Activated CD8-positive, alpha-beta memory T cell treated with anti-CD3 and anti-CD28 coated beads, Interleukin-2, amount 10 ng/mL, durations not matched to agents 7 days and 5 days (primary cell): ENCODE measurements at regions of chr1 and their contacts with region 1.

Region 1: GRCh38 chr1:31745096-31745945 is 18.8 kb downstream of the ADGRB2 start:
- DNase-seq: peak; percentile 84
- ATAC-seq: peak; percentile 88
- H3K4me3 Mint-ChIP-seq: no peak overlapping the region
- H3K27ac Mint-ChIP-seq: no peak overlapping the region
- H3K4me1 Mint-ChIP-seq: peaks cover 39% of the 10 kb centered on the region
- H3K27me3 Mint-ChIP-seq: peaks cover 8% of the 10 kb centered on the region

Region 2: GRCh38 chr1:31626223-31627207 is 118.8 kb before region 1 on chr1:
- CTCF ChIA-PET with region 1: no interaction called
- DNase-seq: no peak
- ATAC-seq: no peak
- H3K4me3 Mint-ChIP-seq: no peak overlapping the region
- H3K27ac Mint-ChIP-seq: no peak overlapping the region
- H3K4me1 Mint-ChIP-seq: peaks cover 16% of the 10 kb centered on the region
- H3K27me3 Mint-ChIP-seq: no peaks in the 10 kb centered on the region

Region 3: DNA sequence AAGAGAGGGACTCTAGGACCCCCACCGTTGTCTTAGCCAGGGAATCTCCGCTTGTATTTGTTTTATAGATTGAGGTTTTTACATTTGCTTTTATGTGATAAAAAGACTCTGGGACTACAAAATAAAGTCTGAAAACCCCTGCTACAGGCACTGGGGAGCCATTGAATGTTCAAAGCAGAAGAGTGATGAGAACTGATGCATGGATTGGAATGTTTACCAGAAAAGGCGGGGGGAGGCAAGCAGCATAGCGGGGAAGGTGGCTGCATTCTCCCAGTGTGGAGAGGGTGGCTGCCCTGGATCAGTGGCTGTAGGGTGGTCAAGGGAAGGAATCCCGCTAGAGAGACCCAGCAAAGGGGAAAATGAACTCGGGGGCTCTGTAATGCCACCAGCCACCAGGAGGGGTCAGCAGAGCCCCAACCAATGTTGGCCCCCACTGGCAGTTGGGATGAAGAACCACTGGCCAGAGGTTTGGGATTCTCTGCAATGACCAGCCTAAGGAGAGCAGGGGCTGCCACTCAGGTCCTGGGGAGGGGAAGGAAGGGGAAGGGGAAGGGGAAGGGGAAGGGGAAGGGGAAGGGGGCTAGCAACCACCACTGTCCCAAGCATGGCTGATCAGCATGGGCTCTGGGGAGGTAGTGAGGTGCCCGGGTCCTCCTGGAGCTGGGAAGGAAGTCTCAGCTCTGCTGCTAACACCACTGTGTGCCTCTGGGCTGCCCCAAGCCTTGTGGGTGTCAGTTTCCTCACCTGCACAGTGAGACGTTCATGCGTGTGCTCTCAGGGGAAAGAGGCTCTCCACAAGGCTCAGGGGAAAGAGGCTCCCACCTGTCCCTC is 81.5 kb before region 1 on chr1:
- CTCF ChIA-PET with region 1: interaction called, 41 read pairs
- DNase-seq: peak; percentile 68
- ATAC-seq: peak; percentile 40
- H3K4me3 Mint-ChIP-seq: no peak overlapping the region
- H3K27ac Mint-ChIP-seq: no peak overlapping the region
- H3K4me1 Mint-ChIP-seq: no peaks in the 10 kb centered on the region
- H3K27me3 Mint-ChIP-seq: peaks cover 10% of the 10 kb centered on the region

Region 4: GRCh38 chr1:31705080-31705866 is 40.0 kb before region 1 on chr1:
- CTCF ChIA-PET with region 1: interaction called, 16 read pairs
- DNase-seq: peak; percentile 92
- ATAC-seq: peak; percentile 87
- H3K4me3 Mint-ChIP-seq: peak overlapping the region; percentile 31
- H3K27ac Mint-ChIP-seq: peak overlapping the region; percentile 61
- H3K4me1 Mint-ChIP-seq: peaks cover 51% of the 10 kb centered on the region
- H3K27me3 Mint-ChIP-seq: peaks cover 44% of the 10 kb centered on the region

Region 5: GRCh38 chr1:31715087-31715872 is 30.0 kb before region 1 on chr1:
- CTCF ChIA-PET with region 1: interaction called, 12 read pairs
- DNase-seq: peak; percentile 54
- ATAC-seq: peak; percentile 71
- H3K4me3 Mint-ChIP-seq: peak overlapping the region; percentile 48
- H3K27ac Mint-ChIP-seq: no peak overlapping the region
- H3K4me1 Mint-ChIP-seq: peaks cover 11% of the 10 kb centered on the region
- H3K27me3 Mint-ChIP-seq: peaks cover 73% of the 10 kb centered on the region

Region 6: GRCh38 chr1:31762726-31763670 is 17.7 kb after region 1 on chr1:
- CTCF ChIA-PET with region 1: interaction called, 17 read pairs
- DNase-seq: peak; percentile 59
- ATAC-seq: peak; percentile 48
- H3K4me3 Mint-ChIP-seq: peak overlapping the region; percentile 52
- H3K27ac Mint-ChIP-seq: no peak overlapping the region
- H3K4me1 Mint-ChIP-seq: peaks cover 19% of the 10 kb centered on the region
- H3K27me3 Mint-ChIP-seq: peaks cover 53% of the 10 kb centered on the region

Region 7: DNA sequence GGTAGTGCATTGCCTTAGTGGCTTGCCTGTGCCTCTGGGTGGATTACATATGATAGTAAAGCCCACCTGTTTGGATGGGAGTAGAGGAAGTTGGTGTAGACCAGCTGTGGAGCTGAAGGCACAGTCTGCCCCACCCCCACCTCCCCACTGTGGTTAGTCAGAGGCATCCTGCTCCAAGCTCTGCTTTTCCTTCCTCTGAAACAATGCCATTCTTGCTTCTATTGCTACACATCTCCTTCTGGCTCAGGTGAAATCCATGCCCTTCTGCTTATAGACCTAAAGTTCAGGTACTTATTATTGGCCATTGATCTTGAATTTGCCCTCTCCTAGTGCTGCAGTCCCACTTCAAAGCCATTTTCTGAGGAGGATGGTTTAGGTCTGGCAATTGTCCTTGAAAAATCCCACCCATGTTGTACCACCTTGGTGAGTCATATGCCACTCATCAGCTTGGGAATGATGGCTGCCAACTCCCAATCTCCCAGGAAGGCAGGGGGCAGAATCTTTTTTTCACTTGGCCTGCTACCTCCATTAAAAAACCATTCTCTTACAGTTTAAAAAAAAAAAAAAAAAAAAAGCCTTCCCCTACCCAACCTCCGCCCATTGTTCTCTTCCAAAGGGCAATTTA is 427.4 kb after region 1 on chr1:
- CTCF ChIA-PET with region 1: no interaction called
- DNase-seq: no peak
- ATAC-seq: no peak
- H3K4me3 Mint-ChIP-seq: no peak overlapping the region
- H3K27ac Mint-ChIP-seq: no peak overlapping the region
- H3K4me1 Mint-ChIP-seq: peaks cover 13% of the 10 kb centered on the region
- H3K27me3 Mint-ChIP-seq: no peaks in the 10 kb centered on the region